ENCODE measurements at regions of chr12 and their contacts with region 1.

Region 1: GRCh38 chr12:110689281-110690126 is 589 bp upstream of the HVCN1 start:
- DNase-seq: peak; percentile 71 to 85 (median 75)
- ATAC-seq: peak; percentile 68 to 73 (median 71)
- H3K4me3 ChIP-seq: peak overlapping the region; percentile 59 to 87 (median 74)
- H3K27ac ChIP-seq: peak overlapping the region; percentile 1 to 88 (median 80)
- H3K4me1 ChIP-seq: peaks cover 5 to 74% (median 24%) of the 10 kb centered on the region in 12 donors
- H3K27me3 ChIP-seq: no peaks in the 10 kb centered on the region
- CTCF ChIP-seq: no peak
- POLR2A ChIP-seq: peak in 1 of 2 donors; percentile 30

Region 2: DNA sequence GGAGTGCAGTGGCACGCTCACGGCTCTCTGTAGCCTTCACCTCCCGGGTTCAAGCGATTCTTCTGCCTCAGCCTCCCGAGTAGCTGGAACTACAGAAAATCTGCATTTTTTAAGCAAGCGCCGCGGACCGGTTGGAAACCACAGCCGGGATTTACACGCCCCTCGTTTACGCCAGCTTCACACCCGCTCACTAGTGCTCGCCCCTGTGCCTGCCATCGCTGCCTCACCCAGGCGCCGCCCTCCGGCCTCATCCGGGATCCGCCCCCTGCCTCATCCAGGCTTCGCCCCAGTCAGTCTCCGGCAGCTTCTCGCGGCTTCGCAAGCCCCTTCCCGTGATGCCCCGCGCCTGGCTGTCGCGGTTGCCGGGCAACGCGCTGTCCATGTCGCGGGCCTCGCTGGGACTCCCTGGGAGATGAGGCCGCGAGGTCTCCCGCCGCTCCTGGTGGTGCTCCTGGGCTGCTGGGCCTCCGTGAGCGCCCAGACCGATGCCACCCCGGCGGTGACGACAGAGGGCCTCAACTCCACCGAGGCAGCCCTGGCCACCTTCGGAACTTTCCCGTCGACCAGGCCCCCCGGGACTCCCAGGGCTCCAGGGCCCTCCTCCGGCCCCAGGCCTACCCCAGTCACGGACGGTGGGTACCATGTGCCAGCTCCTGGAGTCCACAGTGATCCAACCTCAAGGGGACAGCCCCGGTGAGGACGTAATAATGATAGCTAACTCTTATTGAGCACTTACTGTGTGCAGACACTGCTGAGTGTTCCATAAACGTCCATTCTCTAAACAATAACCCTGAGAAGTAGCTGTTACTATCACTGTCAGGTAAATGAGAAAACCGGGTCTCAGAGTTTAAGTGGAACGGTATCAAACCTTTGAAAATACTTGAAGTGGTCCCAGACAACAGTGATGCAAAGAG is 75.5 kb before region 1 on chr12 and contains the start of gene TCTN1:
- intact Hi-C with region 1: loop called in 2 of 10 experiments (anchors 5 kb)
- DNase-seq: peak; percentile 97 to 99 (median 98)
- ATAC-seq: peak; percentile 98 to 100 (median 100)
- H3K4me3 ChIP-seq: peak within 1 kb of the TSS; percentile 24 to 93 (median 65)
- H3K27ac ChIP-seq: peak within 1 kb of the TSS in 11 of 12 donors; percentile 47 to 82 (median 67)
- H3K4me1 ChIP-seq: peaks cover 0 to 15% (median 7%) of the 10 kb centered on the region in 12 donors
- H3K27me3 ChIP-seq: no peaks in the 10 kb centered on the region
- CTCF ChIP-seq: peak in 4 of 12 donors; percentile 10 to 28 (median 21)
- POLR2A ChIP-seq: peak in 1 of 2 donors; percentile 69
- total RNA-seq, gene TCTN1: 17.3 to 27.7 (median 20.2) TPM

Region 3: DNA sequence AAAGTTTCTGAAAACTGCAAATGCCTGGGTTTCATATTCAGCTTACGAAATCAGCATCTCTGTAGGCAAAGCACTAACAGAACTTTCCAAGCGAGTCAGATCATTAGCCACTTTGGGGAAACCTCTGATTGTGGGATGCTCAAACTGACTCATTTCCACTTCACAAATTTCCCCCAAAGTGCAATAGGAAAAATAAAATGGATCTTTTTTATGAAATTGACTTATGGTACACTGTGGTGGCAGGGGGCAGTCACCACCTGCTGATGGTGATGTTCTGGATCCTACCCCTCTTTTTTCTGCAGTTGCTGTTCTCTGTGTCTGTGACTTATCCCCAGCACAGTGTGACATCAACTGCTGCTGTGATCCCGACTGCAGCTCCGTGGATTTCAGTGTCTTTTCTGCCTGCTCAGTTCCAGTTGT is 70.0 kb before region 1 on chr12:
- intact Hi-C with region 1: loop called in 2 of 10 experiments (anchors 5 kb)
- DNase-seq: no peak
- ATAC-seq: no peak
- H3K4me3 ChIP-seq: no peak overlapping the region
- H3K27ac ChIP-seq: no peak overlapping the region
- H3K4me1 ChIP-seq: peaks cover 0 to 6% (median 3%) of the 10 kb centered on the region in 12 donors
- H3K27me3 ChIP-seq: no peaks in the 10 kb centered on the region
- CTCF ChIP-seq: peak in 1 of 12 donors; percentile 7
- POLR2A ChIP-seq: no peak

Region 4: GRCh38 chr12:110641521-110641920 is 48.0 kb before region 1 on chr12:
- intact Hi-C with region 1: no loop called
- DNase-seq: peak; percentile 47 to 75 (median 63)
- ATAC-seq: peak; percentile 4 to 52 (median 35)
- H3K4me3 ChIP-seq: no peak overlapping the region
- H3K27ac ChIP-seq: peak overlapping the region in 9 of 12 donors; percentile 1 to 80 (median 63)
- H3K4me1 ChIP-seq: peaks cover 0 to 35% (median 20%) of the 10 kb centered on the region in 12 donors
- H3K27me3 ChIP-seq: no peaks in the 10 kb centered on the region
- CTCF ChIP-seq: no peak
- POLR2A ChIP-seq: no peak